ENCODE measurements at regions of chr18 and their contacts with region 1.

Region 1: DNA sequence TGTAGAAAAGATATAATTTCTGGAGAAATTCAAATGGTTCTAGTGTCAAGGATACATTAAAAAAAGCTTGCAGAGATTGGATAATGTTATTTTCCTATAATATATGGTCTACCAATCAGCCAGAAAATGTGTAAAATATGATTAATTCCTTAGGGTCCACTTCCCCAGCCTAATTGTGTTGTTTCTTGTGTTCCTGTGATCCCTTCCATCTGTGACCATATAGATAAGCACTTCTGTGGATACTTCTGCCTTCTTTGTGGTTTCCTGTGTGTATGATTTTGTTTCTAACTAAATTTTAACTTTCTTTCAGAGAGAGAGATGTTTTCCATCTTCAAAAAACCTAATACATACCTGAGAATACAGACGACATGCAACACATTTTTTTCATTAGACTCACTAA is 367.1 kb upstream of the PIK3C3 start:
- DNase-seq: no peak
- ATAC-seq: no peak

Region 2: GRCh38 chr18:41406834-41407233 is 181.1 kb before region 1 on chr18:
- intact Hi-C with region 1: no loop called
- DNase-seq: no peak
- ATAC-seq: no peak

Region 3: GRCh38 chr18:41524674-41525470 is 63.1 kb before region 1 on chr18:
- intact Hi-C with region 1: loop called in 1 of 2 experiments (anchors 10 kb)
- DNase-seq: no peak
- ATAC-seq: no peak